ENCODE measurements at regions of chr9 and their contacts with region 1.

Region 1: DNA sequence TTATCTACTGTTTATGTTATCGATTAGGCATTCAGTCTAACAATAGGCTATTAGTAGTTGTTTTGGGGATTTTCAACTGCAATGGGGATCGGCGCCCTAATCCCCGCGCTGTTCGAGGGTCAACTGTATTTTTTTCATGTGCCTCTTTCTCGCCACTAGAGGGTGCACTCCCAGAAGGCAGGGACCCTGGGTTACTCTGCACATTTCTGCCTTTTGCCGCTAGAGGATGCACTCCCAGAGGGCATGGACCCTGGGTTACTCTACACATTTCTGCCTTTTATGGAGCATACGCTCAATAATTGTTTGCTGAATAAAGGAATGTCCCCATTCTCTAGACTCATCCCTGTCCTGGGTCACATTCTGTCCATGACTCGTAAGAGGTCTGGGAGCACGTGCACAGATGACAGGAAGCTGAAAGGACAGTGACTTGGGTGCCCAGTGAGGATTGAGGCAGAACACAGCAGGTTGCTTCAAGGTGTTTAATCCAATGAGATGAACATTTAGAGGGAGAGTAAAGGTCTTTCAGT is 27.9 kb upstream of the RECK start:
- DNase-seq: no peak
- H3K4me3 ChIP-seq: no peak overlapping the region
- H3K27me3 ChIP-seq: peaks cover 1% of the 10 kb centered on the region
- CTCF ChIP-seq: peak; percentile 100

Region 2: GRCh38 chr9:35903049-35903448 is 105.8 kb before region 1 on chr9:
- CTCF ChIA-PET with region 1: interaction called, 13 read pairs
- POLR2A ChIA-PET with region 1: no interaction called
- DNase-seq: no peak
- H3K4me3 ChIP-seq: no peak overlapping the region
- H3K27me3 ChIP-seq: peaks cover 2% of the 10 kb centered on the region; the same call in 1 of the 2 replicates
- CTCF ChIP-seq: peak; percentile 52

Region 3: DNA sequence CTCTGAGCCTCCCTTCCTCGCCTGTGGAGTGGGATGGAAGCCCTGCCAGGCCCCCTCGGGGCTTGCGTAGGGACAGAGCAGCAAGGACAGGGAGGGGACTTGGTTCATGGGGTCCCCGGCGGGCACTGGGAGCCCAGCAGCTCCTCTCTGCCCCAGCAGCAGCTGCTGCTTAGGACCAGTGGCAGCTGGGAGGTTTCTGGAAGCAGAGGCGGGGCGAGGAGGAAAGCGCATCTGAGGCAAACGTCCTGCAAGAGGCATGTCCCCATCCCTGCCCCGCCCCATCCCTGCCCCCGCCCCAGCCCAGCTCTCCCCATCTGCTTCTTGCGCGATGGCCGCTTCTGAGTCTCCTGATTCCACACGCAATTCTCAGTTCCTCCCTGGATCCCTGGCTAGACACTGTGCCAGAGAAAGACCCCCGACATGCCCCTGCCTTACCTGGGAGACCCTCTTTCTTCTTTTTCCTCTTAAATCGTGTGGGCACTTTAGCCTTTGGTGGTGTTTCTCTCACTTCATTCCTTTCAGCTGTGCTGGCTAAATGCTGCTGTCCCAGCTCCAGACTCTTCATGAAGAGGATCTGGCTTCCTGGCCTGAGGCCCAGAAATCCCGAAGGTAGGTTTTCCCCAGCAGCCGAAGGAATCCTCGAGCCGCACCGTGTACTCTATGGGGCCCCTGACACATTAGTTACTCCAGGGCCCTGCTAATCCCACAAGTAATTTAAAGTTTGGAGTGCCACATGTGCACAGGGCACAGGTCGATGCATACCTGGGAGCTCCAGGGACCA is 46.5 kb before region 1 on chr9:
- CTCF ChIA-PET with region 1: interaction called, 87 read pairs
- POLR2A ChIA-PET with region 1: interaction called, 8 read pairs
- DNase-seq: peak; percentile 28
- H3K4me3 ChIP-seq: peak overlapping the region; percentile 30
- H3K27me3 ChIP-seq: no peaks in the 10 kb centered on the region
- CTCF ChIP-seq: no peak

Region 4: GRCh38 chr9:35996358-35996975 is 12.4 kb before region 1 on chr9:
- CTCF ChIA-PET with region 1: interaction called, 17 read pairs
- POLR2A ChIA-PET with region 1: no interaction called
- DNase-seq: no peak
- H3K4me3 ChIP-seq: no peak overlapping the region
- H3K27me3 ChIP-seq: no peaks in the 10 kb centered on the region
- CTCF ChIP-seq: no peak

Region 5: DNA sequence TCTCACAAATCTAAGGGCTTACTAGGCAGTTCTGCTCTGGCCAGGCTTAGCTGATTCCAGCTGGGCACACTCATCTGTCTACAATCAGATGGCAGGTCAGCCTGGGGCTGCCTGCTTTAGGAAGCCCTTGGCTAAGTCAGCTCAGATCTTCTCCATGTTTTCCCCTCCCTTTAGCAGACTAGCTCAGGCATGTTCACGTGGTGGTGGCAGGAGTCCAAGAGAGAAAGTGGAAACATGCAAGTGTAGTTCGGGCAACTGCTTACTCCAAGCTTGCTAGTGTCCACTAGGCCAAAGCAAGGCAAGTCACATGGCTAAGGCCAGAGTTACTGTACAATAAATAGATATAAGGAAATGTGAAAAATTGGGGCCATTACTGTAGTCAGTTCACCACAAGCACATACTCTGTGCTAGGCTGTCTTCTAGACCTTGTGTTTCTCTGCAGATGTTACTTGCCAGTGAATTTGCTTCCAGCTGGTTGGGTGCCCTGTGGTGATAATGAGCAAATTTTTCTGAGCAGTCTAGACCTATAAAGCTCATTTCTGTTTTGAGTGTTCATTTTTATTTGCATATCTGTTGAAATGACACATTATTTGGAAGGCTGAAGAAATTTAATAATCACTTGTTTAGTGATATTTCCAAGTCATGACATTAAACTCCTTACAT is 66.2 kb after region 1 on chr9:
- CTCF ChIA-PET with region 1: interaction called, 13 read pairs
- POLR2A ChIA-PET with region 1: interaction called, 3 read pairs
- DNase-seq: peak; percentile 49
- H3K4me3 ChIP-seq: no peak overlapping the region
- H3K27me3 ChIP-seq: no peaks in the 10 kb centered on the region
- CTCF ChIP-seq: no peak

Region 6: DNA sequence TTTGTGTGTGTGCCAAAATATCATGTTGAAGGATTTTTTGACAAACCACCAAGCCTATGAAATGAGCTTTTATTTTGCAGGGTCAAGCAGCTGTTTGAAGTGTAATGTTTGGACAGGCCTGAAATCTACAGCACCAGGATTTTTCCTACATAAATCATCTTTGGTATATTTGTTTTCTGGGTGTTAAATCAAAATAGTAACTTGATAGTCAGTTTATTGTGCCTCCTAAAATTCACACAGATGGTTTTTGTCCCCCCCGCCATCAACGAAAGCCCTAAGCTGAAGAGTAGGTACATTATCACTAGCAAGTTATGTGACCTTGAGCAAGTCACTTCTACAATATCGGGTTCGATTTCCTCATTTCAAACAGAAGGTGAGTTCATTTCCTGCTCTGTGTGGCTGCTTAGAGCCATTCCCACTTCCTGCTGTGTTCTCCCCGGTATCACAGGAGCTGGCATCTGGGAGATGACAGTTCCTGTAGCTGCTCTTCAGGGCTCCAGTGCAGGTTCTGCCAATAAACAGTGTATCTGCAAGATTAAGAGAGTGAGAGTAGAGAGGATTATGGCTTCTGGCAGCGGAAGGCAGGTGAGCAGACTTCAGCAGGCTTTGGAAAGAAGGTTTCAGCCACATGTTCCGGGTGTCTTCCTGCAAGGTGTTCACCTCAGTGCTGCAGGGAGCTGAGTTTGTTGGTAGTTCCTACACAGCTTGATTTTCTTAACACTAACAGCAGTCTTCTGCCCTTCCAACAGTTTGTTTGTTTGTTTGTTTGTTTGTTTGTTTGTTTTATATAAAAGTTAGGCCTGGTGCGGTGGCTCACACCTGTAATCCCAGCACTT is 297.9 kb after region 1 on chr9:
- CTCF ChIA-PET with region 1: no interaction called
- POLR2A ChIA-PET with region 1: no interaction called
- DNase-seq: no peak
- H3K4me3 ChIP-seq: no peak overlapping the region
- H3K27me3 ChIP-seq: no peaks in the 10 kb centered on the region
- CTCF ChIP-seq: no peak

Region 7: GRCh38 chr9:36328798-36329411 is 320.1 kb after region 1 on chr9:
- CTCF ChIA-PET with region 1: interaction called, 14 read pairs
- POLR2A ChIA-PET with region 1: no interaction called
- DNase-seq: peak; percentile 12
- H3K4me3 ChIP-seq: no peak overlapping the region
- H3K27me3 ChIP-seq: no peaks in the 10 kb centered on the region
- CTCF ChIP-seq: peak; percentile 73